ENCODE measurements at regions of chr22 and their contacts with region 1.

Region 1: DNA sequence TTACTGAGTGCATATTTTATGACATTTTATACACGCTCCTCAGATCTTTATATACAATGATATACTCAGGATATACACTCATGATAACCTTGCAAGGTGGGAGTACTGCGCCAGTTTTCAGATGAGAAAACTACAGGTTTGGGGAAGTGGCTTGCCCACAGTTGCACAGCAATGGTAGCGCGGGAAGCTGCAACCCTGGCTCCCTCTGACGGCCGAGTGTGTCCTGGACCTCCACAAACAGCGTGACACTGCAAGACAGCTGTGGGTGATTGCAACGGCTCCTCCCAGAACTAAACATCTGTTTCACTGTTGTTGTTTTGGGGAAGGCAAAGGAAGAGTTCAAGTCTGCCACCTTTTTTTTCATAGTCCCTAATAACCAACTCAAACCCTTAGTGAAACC is 47.0 kb downstream of the PACSIN2 start:
- DNase-seq: peak; percentile 95

Region 2: DNA sequence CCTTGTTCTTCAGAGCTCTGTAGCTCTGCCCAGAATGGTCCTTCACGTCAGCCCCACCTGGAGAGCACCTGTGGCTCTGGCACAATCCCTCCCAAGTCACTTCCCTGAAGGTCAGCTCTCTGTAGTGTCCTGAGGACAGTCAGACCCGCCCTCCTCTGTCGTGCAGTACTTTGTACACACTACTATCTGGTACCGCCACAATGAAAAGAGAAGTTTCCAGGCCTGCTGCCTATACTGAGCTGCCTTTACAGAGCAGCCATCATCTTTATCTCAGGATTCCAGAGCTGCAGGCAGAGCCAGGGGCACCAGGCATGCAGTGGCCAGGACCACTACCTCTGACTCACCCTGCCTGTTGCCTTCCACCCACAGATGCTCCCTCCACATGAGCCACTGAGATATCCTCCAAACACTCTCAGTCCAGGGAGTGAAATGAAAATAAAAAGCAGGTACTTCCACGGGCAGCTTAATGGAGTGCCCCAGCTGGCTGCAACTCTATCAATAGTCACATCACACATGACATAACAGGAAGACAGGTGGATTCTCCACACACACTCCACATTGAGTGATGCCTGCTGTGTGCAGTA is 39.7 kb after region 1 on chr22:
- intact Hi-C with region 1: loop called (anchors 5 kb)
- DNase-seq: no peak